ENCODE measurements at regions of chr5 and their contacts with region 1.

Region 1: DNA sequence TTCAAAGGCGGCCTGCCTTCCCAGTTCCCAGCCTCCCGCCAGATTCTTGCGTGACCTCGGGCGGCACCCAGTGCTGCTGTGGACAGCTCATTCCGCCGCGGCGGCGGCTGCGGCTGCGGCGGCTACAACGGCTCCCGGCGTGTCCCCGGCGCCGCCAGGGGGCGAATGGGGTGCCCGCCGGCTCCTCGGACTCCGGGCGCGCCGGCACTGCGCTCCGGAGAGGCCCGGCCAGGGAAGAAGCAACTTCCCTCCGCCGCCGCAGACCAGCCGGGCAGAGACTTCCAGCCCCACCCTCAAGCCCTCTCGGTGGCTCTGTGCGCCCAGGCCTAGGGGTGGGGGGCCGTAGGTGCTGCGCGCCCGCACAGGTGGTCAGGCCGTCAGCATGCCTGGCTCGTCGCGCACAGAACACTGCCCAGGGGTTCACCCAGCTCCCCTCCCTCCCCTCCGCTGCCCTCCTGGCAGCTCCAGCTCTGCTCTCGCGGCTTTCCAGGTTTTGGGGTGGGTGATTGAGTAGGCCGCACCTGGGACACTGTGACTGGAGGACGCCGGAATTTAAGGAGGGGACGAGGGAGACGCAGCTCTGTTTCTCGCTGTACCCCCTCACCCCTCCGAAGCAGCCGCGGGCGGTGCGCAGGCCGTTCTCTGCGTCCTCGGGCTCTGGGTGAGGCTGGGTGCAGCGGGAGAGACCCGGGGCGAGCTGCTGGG is 20.2 kb downstream of the IGIP start:
- DNase-seq: peak; percentile 31 to 56 (median 39)
- H3K4me3 ChIP-seq: peak overlapping the region; percentile 32
- H3K4me3 Mint-ChIP-seq: peak overlapping the region in 5 of 7 donors; percentile 10 to 69 (median 48)
- H3K27ac ChIP-seq: no peak overlapping the region
- H3K27ac Mint-ChIP-seq: no peak overlapping the region
- H3K4me1 ChIP-seq: peaks cover 15% of the 10 kb centered on the region
- H3K4me1 Mint-ChIP-seq: peaks cover 17 to 32% (median 26%) of the 10 kb centered on the region in 3 donors
- H3K27me3 ChIP-seq: peaks cover 11% of the 10 kb centered on the region
- H3K27me3 Mint-ChIP-seq: peaks cover 12 to 17% of the 10 kb centered on the region in 2 donors

Region 2: DNA sequence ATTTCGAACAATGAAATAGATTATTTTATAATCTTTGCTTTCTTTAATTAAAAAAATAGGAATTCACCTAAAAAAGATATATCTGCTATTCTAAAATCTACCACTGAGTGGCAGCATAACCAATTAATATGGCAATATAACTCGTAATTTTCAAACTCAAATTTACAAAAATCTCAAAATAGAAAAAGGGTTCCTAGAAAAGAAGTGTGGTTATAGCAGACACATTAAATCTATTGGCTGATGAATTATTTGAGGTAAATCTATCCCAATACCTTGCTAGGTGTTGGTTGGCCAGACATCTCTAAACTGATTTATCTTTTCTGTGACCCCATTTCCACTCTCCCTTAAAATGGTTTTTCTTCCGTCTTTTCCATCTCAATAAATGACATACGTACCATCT is 72.7 kb before region 1 on chr5:
- CTCF ChIA-PET with region 1: interaction called, 116 read pairs
- POLR2A ChIA-PET with region 1: no interaction called
- DNase-seq: peak in 2 of 5 donors; percentile 24 to 45
- H3K4me3 ChIP-seq: no peak overlapping the region
- H3K4me3 Mint-ChIP-seq: no peak overlapping the region
- H3K27ac ChIP-seq: no peak overlapping the region
- H3K27ac Mint-ChIP-seq: no peak overlapping the region
- H3K4me1 ChIP-seq: no peaks in the 10 kb centered on the region
- H3K4me1 Mint-ChIP-seq: no peaks in the 10 kb centered on the region
- H3K27me3 ChIP-seq: no peaks in the 10 kb centered on the region
- H3K27me3 Mint-ChIP-seq: peaks cover 11 to 25% of the 10 kb centered on the region in 2 donors

Region 3: DNA sequence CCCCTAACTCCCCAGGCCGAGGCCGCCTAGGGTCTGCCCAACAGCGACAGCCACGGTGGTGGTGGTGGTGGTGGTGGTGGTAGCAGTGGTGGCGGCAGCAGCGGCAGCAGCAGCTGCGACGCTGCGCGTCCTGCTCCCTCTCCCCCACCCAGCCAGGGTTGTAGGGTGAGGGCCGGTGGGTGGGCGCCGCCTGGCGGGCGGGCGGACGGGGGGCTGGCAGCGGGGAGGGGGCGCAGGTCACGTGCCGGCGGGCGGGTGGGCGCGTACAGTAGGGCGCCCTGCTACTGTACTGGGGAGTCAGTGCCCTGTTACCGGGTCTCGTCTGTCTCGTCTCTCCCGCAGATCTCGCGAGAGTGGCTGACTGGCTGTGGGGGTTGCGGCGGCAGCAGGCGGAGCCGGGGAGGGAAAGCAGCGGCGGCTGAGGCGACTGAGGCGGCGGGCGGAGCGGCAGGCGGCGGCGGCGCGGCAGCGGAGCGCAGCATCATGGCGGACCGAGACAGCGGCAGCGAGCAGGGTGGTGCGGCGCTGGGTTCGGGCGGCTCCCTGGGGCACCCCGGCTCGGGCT is 32.2 kb before region 1 on chr5 and contains the start of gene PURA:
- CTCF ChIA-PET with region 1: interaction called, 53 read pairs
- POLR2A ChIA-PET with region 1: interaction called, 4 read pairs
- DNase-seq: peak; percentile 96 to 99 (median 97)
- H3K4me3 ChIP-seq: peak within 1 kb of the TSS; percentile 81
- H3K4me3 Mint-ChIP-seq: peak within 1 kb of the TSS; percentile 94 to 98 (median 95)
- H3K27ac ChIP-seq: peak within 1 kb of the TSS; percentile 74
- H3K27ac Mint-ChIP-seq: peak within 1 kb of the TSS; percentile 90 to 99 (median 97)
- H3K4me1 ChIP-seq: peaks cover 70% of the 10 kb centered on the region
- H3K4me1 Mint-ChIP-seq: peaks cover 61 to 88% (median 72%) of the 10 kb centered on the region in 3 donors
- H3K27me3 ChIP-seq: no peaks in the 10 kb centered on the region
- H3K27me3 Mint-ChIP-seq: peaks cover 0 to 4% of the 10 kb centered on the region in 2 donors
- total RNA-seq, gene PURA: 14.8 to 16.4 TPM

Region 4: GRCh38 chr5:140157032-140157803 is 11.2 kb after region 1 on chr5:
- CTCF ChIA-PET with region 1: interaction called, 83 read pairs
- POLR2A ChIA-PET with region 1: no interaction called
- DNase-seq: peak; percentile 75 to 88 (median 79)
- H3K4me3 ChIP-seq: no peak overlapping the region
- H3K4me3 Mint-ChIP-seq: peak overlapping the region in 5 of 7 donors; percentile 8 to 72 (median 44)
- H3K27ac ChIP-seq: no peak overlapping the region
- H3K27ac Mint-ChIP-seq: peak overlapping the region in 3 of 8 donors; percentile 48 to 54 (median 53)
- H3K4me1 ChIP-seq: peaks cover 3% of the 10 kb centered on the region
- H3K4me1 Mint-ChIP-seq: peaks cover 3 to 10% (median 9%) of the 10 kb centered on the region in 3 donors
- H3K27me3 ChIP-seq: no peaks in the 10 kb centered on the region
- H3K27me3 Mint-ChIP-seq: no peaks in the 10 kb centered on the region